Endothelial cell of umbilical vein (primary cell): ENCODE measurements at regions of chr12 and their contacts with region 1.

Region 1: DNA sequence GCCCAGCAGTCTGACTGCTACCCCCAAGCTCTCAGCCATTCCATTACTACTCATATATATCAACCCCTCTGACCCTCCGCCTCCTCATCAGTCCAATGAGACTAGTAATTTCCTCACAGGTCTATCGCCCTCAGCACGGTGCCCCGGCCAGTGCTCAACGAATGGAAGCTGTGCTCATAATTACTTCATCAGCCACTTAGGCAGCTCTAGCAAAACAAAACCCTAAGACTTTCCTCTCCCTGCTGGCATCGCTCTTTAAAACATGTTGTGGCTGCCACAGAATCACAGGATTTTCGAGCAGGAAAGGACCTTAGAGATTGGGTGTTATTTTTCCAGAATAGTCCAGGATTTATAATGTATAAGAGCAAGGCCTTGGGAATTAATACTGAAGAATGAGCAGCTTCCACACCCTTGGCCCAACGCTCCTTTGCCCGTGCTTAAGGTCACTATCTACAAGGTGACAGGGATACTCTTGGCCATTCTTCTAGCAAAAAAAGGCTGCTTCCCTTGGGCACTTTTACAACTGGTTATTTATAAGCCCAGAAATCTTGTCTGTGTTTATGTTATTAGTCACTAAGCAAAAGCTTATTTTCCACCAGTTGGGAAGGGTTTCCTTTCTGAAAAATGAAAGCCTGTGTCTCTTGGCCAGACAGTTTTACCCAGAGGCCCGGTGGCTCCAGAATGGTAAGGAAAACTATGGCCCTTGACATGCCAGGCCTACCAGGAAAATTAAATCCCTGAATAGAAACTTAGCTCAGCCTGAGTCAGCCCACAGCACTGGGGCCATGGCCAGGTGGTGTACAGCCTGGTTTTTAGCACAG is 48.0 kb downstream of the NUAK1 start:
- DNase-seq: peak; percentile 96
- H3K4me3 ChIP-seq: no peak overlapping the region
- H3K27ac ChIP-seq: peak overlapping the region; percentile 86
- H3K4me1 ChIP-seq: peaks cover 23% of the 10 kb centered on the region
- H3K27me3 ChIP-seq: no peaks in the 10 kb centered on the region
- CTCF ChIP-seq: no peak
- POLR2A ChIP-seq: no peak

Region 2: GRCh38 chr12:105793421-105793820 is 297.4 kb before region 1 on chr12:
- CTCF ChIA-PET with region 1: no interaction called
- POLR2A ChIA-PET with region 1: no interaction called
- dilution Hi-C with region 1: no loop called
- intact Hi-C with region 1: no loop called
- DNase-seq: no peak
- H3K4me3 ChIP-seq: no peak overlapping the region
- H3K27ac ChIP-seq: no peak overlapping the region
- H3K4me1 ChIP-seq: no peaks in the 10 kb centered on the region
- H3K27me3 ChIP-seq: peaks cover 12% of the 10 kb centered on the region in 2 experiments
- CTCF ChIP-seq: no peak
- POLR2A ChIP-seq: no peak

Region 3: DNA sequence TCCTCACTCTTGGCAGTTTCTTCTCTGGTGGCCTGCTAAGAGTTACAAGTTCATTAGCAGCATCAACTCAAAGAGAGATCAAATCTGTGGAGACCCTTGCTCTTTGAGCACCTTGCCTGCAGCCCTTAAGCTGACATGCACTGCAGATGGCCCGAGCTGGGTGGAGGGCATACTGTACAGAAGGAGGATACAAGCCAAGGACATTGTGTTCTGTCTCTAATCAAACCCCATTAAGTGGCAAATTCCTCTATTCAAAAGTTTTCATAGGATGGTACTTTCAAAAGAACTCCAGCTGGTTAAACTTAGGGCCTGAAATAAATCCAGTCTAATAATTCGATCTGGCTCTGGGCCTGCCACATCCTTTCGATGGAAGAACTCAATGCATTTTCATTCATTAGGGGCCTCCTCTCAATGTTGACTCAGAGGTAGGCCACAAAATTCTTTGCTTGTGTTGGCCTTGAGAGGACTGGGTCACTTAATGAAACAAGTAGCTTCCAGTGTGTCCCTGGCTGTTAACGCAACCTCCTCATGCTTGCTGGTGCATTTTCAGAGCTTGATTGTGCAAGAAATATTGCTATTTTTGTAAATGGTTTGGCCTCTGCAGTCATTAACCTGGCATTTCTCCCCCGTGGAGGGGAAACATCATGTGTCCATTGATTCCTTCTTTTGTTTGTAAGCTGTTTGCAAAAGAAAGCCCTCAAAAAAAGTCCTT is 270.2 kb before region 1 on chr12:
- CTCF ChIA-PET with region 1: no interaction called
- POLR2A ChIA-PET with region 1: no interaction called
- dilution Hi-C with region 1: no loop called
- intact Hi-C with region 1: no loop called
- DNase-seq: no peak
- H3K4me3 ChIP-seq: no peak overlapping the region
- H3K27ac ChIP-seq: no peak overlapping the region
- H3K4me1 ChIP-seq: no peaks in the 10 kb centered on the region
- H3K27me3 ChIP-seq: peaks cover 12 to 22% of the 10 kb centered on the region in 2 experiments
- CTCF ChIP-seq: no peak
- POLR2A ChIP-seq: no peak

Region 4: GRCh38 chr12:106030210-106031175 is 60.3 kb before region 1 on chr12:
- CTCF ChIA-PET with region 1: no interaction called
- POLR2A ChIA-PET with region 1: no interaction called
- dilution Hi-C with region 1: no loop called
- intact Hi-C with region 1: loop called (anchors 2 kb)
- DNase-seq: peak; percentile 83
- H3K4me3 ChIP-seq: peak overlapping the region in 1 of 3 experiments; percentile 18
- H3K27ac ChIP-seq: peak overlapping the region; percentile 97
- H3K4me1 ChIP-seq: peaks cover 25% of the 10 kb centered on the region
- H3K27me3 ChIP-seq: no peaks in the 10 kb centered on the region
- CTCF ChIP-seq: no peak
- POLR2A ChIP-seq: no peak

Region 5: DNA sequence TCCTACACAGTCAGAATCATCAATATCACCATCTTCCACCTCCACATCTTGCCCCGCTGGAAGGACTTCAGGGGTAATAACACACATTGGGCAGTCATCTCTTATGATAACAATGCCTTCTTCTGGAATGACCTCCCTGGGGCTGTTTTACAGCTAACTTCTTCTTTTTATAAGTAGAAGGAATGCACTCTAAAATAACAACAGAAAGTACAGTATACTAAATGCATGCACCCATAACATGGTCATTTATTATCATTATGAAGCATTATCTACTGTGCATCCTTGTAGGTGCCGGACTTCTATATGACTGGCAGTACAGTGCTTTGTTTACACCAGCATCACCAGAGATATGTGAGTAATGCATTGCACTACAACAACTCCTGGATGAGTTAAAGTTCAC is 67.0 kb after region 1 on chr12:
- CTCF ChIA-PET with region 1: no interaction called
- POLR2A ChIA-PET with region 1: no interaction called
- dilution Hi-C with region 1: no loop called
- intact Hi-C with region 1: no loop called
- DNase-seq: no peak
- H3K4me3 ChIP-seq: no peak overlapping the region
- H3K27ac ChIP-seq: no peak overlapping the region
- H3K4me1 ChIP-seq: peaks cover 10% of the 10 kb centered on the region
- H3K27me3 ChIP-seq: peaks cover 7 to 9% of the 10 kb centered on the region in 2 experiments
- CTCF ChIP-seq: no peak
- POLR2A ChIP-seq: no peak

Region 6: DNA sequence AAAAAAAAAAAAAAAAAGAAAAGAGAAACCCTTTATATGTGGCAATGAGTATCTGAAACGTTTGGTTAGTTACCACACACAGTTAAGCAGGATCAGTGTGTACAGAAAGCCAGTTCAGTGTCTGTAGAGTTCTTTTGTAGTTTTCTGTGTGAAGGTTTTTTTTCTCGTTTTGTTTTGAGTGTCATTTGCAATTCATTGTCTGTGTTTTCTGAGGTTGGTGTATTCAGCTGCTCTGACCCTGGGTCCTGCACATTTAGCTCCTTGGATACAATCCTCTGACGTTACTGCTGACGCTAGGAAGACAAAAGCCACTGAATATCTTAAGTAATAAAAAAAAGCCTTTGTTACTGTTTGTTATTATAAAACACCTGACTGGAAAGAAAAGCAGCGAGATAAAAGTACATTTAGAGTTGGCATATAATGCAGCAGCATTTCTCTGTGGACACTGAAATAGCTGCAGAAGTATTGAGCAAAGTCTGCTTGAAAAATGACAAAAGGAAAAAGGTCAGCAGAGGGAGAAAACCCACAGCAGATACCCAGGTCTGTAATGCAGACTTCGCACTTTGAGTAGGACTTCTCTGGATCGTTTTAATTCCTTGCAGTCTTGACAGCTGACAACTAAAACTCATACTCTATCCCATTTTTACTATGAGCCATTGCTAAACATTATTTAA is 355.8 kb after region 1 on chr12:
- CTCF ChIA-PET with region 1: no interaction called
- POLR2A ChIA-PET with region 1: no interaction called
- dilution Hi-C with region 1: no loop called
- intact Hi-C with region 1: no loop called
- DNase-seq: peak; percentile 28
- H3K4me3 ChIP-seq: no peak overlapping the region
- H3K27ac ChIP-seq: no peak overlapping the region
- H3K4me1 ChIP-seq: no peaks in the 10 kb centered on the region
- H3K27me3 ChIP-seq: no peaks in the 10 kb centered on the region
- CTCF ChIP-seq: no peak
- POLR2A ChIP-seq: no peak